ENCODE measurements at regions of chr22 and their contacts with region 1.

Region 1: GRCh38 chr22:28800308-28801077 is at the start of gene XBP1:
- DNase-seq: peak; percentile 94 to 97 (median 95)
- ATAC-seq: peak; percentile 94
- H3K4me3 ChIP-seq: peak within 1 kb of the TSS; percentile 98
- H3K27ac ChIP-seq: peak within 1 kb of the TSS; percentile 98
- H3K4me1 ChIP-seq: peaks cover 8 to 9% of the 10 kb centered on the region in 2 experiments; a peak in 3 of 5 replicates
- H3K27me3 ChIP-seq: no peaks in the 10 kb centered on the region
- CTCF ChIP-seq: no peak
- EP300 ChIP-seq: no peak
- POLR2A ChIP-seq: peak; percentile 86
- RAD21 ChIP-seq: no peak
- polyA plus RNA-seq, gene XBP1: 25.0 to 28.6 TPM

Region 2: DNA sequence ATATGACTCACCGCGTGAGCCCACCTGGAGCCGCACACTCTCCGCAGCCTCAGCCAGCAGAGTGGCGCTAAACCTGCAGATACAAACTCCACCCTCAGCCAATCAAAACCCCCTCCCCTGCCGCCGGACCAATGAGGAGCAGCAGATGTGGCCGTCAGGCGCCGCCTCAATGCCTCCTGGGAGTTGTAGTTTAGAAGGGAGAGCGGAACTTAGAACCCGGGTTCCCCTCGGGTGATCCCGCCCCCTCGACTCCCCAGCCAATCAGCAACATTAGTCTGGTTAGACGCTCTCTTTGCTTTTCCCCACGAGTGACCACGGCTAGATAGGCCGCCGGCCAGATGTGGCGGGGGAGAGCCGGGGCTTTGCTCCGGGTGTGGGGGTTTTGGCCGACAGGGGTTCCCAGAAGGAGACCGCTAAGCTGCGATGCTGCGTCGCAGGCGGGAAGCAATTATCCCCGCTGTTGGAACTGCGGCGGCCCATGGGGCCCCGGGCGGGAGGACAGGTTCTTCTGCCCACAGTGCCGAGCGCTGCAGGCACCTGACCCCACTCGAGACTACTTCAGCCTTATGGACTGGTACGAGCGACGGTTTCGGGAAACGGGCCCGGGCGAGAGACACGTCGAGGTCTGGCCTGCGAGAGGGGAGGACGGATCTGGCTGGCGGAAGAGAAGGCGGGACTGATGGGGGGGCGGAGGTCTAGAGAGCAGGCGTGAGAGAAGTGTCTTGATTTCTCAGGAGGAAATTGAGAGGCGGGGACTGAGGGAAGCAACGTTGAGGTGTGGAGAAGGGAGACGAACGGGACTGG is 58.5 kb before region 1 on chr22 and contains the starts of genes CHEK2 and HSCB:
- CTCF ChIA-PET with region 1: no interaction called
- POLR2A ChIA-PET with region 1: interaction called, 10 read pairs
- in situ Hi-C with region 1: no loop called
- intact Hi-C with region 1: no loop called
- DNase-seq: peak; percentile 94 to 97 (median 96)
- ATAC-seq: peak; percentile 96
- H3K4me3 ChIP-seq: peak within 1 kb of the TSS; percentile 92
- H3K27ac ChIP-seq: peak within 1 kb of the TSS; percentile 88
- H3K4me1 ChIP-seq: peaks cover 4 to 10% of the 10 kb centered on the region in 2 experiments; a peak in 3 of 5 replicates
- H3K27me3 ChIP-seq: no peaks in the 10 kb centered on the region
- CTCF ChIP-seq: peak in 2 of 3 experiments; percentile 32 to 38; a peak in 3 of 6 replicates
- EP300 ChIP-seq: no peak
- POLR2A ChIP-seq: peak; percentile 80
- RAD21 ChIP-seq: no peak
- polyA plus RNA-seq, gene CHEK2: 70.9 to 102 TPM
- polyA plus RNA-seq, gene HSCB: 2.6 to 4.4 TPM

Region 3: DNA sequence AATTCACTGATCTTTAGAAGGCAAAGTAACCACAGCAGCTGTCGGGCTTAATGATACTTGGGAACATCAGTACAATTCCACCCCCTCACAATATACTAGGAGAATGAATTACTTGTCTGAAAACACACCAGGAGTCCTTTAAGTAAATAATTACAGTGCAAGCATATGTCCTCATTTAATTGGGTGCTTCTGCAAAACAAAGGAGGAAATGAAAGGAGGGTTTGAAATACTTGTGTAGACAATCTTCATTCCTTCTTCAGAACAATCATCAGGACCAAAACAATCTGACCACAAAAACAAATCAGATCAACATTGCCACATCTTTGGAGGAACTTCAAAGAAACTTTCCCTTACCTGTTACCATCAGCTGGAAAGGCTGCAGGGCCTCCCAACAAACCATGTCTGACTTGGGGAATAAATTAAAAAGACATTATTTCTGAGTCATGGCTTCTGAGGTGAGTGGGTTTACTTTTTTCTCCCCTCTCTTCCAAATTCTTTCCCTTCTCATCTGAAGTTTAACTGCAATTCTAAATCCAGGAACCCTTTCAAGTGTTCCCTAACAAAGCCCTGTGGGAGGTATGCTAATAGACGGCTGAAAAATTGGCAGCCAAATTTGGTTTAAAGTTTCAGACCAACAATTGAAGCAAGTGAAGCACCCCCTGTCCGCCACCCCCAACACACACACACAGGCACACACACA is 40.5 kb before region 1 on chr22:
- CTCF ChIA-PET with region 1: no interaction called
- POLR2A ChIA-PET with region 1: no interaction called
- in situ Hi-C with region 1: no loop called
- intact Hi-C with region 1: no loop called
- DNase-seq: no peak
- ATAC-seq: no peak
- H3K4me3 ChIP-seq: no peak overlapping the region
- H3K27ac ChIP-seq: no peak overlapping the region
- H3K4me1 ChIP-seq: no peaks in the 10 kb centered on the region
- H3K27me3 ChIP-seq: no peaks in the 10 kb centered on the region
- CTCF ChIP-seq: no peak
- EP300 ChIP-seq: no peak
- POLR2A ChIP-seq: no peak
- RAD21 ChIP-seq: no peak

Region 4: GRCh38 chr22:28779833-28780232 is 20.7 kb before region 1 on chr22:
- CTCF ChIA-PET with region 1: no interaction called
- POLR2A ChIA-PET with region 1: interaction called, 109 read pairs
- in situ Hi-C with region 1: no loop called
- intact Hi-C with region 1: no loop called
- DNase-seq: peak in 3 of 4 experiments; percentile 19 to 62 (median 62)
- ATAC-seq: peak; percentile 93
- H3K4me3 ChIP-seq: no peak overlapping the region
- H3K27ac ChIP-seq: peak overlapping the region; percentile 68; the same call in 2 of the 3 replicates
- H3K4me1 ChIP-seq: peaks cover 3 to 12% of the 10 kb centered on the region in 2 experiments; a peak in 4 of 5 replicates
- H3K27me3 ChIP-seq: no peaks in the 10 kb centered on the region
- CTCF ChIP-seq: no peak
- EP300 ChIP-seq: no peak
- POLR2A ChIP-seq: no peak
- RAD21 ChIP-seq: no peak

Region 5: DNA sequence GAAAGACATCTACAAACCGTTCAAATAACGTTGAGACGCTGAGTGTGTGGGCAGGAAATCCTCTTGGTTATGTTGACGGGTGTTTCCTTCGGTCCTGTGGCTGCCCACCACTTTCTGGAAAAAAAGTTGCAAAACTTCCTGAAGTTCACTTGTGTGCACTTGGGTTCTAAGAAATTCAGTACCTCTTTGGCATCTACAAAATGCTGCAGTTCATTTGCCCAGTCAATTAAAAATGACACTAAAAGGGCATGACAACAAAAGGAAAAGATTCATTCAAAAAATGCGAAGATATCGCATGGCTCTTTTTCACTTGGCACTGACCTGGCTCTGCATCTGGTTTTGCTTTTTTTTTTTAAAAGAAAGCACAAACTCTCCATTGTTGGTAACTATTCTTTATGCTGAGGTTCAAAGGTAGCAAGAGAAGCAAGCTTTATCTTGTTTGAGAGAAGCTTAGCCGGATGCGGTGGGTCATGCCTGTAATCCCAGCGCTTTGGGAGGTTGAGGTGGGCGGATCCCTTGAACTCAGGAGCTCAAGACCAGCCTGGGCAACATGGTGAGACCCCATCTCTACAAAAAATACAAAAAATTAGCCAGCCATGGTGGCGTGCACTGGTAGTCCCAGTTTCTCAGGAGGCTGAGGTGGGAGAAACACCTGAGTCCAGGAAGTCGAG is 10.5 kb after region 1 on chr22:
- CTCF ChIA-PET with region 1: no interaction called
- POLR2A ChIA-PET with region 1: interaction called, 21 read pairs
- in situ Hi-C with region 1: no loop called
- intact Hi-C with region 1: no loop called
- DNase-seq: no peak
- ATAC-seq: no peak
- H3K4me3 ChIP-seq: no peak overlapping the region
- H3K27ac ChIP-seq: peak overlapping the region; percentile 5; the same call in 1 of the 3 replicates
- H3K4me1 ChIP-seq: peaks cover 11 to 13% of the 10 kb centered on the region in 2 experiments; a peak in 4 of 5 replicates
- H3K27me3 ChIP-seq: no peaks in the 10 kb centered on the region
- CTCF ChIP-seq: no peak
- EP300 ChIP-seq: no peak
- POLR2A ChIP-seq: no peak
- RAD21 ChIP-seq: no peak

Region 6: DNA sequence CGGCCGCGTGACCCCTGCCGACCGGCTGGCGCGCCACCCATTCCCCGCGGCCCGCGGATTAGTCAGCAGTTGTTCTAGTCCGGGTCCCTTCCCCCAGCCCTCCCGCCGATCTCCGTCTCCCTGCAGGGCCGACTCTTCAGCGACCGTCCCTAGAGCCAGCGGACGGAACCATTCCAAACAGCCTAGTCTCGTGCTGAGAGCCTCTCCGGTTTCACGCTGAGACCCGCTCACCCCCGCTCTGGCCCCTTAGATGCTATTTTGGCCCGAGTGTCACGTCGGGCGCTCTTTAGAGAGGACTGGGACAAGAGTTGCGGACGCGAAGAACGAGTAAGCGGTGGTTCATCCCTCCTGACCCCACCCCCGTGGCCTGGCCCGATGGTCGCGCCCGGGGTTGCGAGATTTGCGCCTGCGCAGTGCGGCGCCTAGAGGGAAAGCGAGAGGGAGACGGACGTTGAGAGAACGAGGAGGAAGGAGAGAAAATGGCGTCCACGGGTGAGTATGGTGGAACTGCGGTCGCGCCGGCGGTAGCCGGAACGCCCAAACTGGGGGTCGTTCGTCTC is 467.4 kb after region 1 on chr22 and contains the starts of genes EWSR1 and RHBDD3:
- CTCF ChIA-PET with region 1: no interaction called
- POLR2A ChIA-PET with region 1: interaction called, 10 read pairs
- in situ Hi-C with region 1: no loop called
- intact Hi-C with region 1: no loop called
- DNase-seq: peak; percentile 81 to 96 (median 88)
- ATAC-seq: peak; percentile 85
- H3K4me3 ChIP-seq: peak within 1 kb of the TSS; percentile 91
- H3K27ac ChIP-seq: peak within 1 kb of the TSS; percentile 100
- H3K4me1 ChIP-seq: peaks cover 24 to 31% of the 10 kb centered on the region in 2 experiments; a peak in 4 of 5 replicates
- H3K27me3 ChIP-seq: no peaks in the 10 kb centered on the region
- CTCF ChIP-seq: peak in 1 of 3 experiments; percentile 0; a peak in 1 of 6 replicates
- EP300 ChIP-seq: peak; percentile 24
- POLR2A ChIP-seq: peak; percentile 90
- RAD21 ChIP-seq: no peak
- polyA plus RNA-seq, gene EWSR1: 83.3 to 101 TPM
- polyA plus RNA-seq, gene RHBDD3: 0.32 to 1.2 TPM

Region 7: GRCh38 chr22:29469755-29470154 is 669.3 kb after region 1 on chr22:
- CTCF ChIA-PET with region 1: no interaction called
- POLR2A ChIA-PET with region 1: no interaction called
- in situ Hi-C with region 1: no loop called
- intact Hi-C with region 1: no loop called
- DNase-seq: no peak
- ATAC-seq: peak; percentile 36; the same call in 1 of the 3 replicates
- H3K4me3 ChIP-seq: no peak overlapping the region
- H3K27ac ChIP-seq: no peak overlapping the region
- H3K4me1 ChIP-seq: peaks cover 0 to 11% of the 10 kb centered on the region in 2 experiments; a peak in 2 of 5 replicates
- H3K27me3 ChIP-seq: no peaks in the 10 kb centered on the region
- CTCF ChIP-seq: no peak
- EP300 ChIP-seq: no peak
- POLR2A ChIP-seq: no peak
- RAD21 ChIP-seq: no peak